ENCODE measurements at regions of chr11 and their contacts with region 1.

Region 1: DNA sequence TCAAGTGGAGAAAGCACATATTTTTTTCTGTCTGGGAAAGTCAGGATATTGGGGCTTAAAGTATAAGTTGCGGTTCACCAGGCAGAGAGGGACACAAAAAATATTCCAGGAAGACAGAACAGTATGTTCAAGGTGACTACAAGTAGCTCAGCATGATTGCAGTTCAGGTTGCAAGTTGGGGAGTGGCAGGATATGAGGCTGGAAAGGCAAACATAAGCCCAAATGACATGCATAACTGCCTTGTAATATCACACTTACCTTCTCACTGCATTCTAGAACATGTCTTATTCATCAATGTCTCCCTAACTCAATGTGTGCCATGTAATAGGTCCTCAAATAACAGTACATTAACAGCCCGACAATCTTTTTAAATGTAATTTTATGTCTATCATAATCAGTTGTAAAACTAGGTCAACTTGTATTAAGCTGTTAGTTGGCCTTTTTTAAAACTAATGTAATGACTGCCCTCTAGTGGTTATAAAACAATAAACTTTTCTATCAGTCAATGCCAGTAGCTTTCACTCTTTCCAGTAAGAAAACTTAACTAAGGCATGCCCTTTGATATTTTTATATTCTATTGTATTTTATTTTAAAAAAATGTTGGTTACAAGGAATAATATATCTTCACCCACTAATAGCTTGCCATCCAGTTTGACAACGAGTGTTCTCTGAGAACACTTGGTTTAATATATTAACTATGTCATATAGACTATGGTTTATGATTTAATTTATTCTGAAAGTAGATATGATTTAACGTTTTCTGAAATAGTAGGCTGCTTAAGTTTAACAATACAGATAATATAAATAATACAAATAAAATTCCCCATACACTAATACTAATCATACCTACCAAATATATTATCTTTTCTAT is 39.4 kb upstream of the CFAP300 start:
- DNase-seq: peak in 6 of 9 donors; percentile 10 to 48 (median 39)
- ATAC-seq: peak; percentile 61
- H3K4me3 ChIP-seq: no peak overlapping the region
- H3K4me3 Mint-ChIP-seq: no peak overlapping the region
- H3K27ac ChIP-seq: no peak overlapping the region
- H3K27ac Mint-ChIP-seq: no peak overlapping the region
- H3K4me1 ChIP-seq: no peaks in the 10 kb centered on the region
- H3K4me1 Mint-ChIP-seq: peaks cover 0 to 6% (median 5%) of the 10 kb centered on the region in 7 donors
- H3K27me3 ChIP-seq: no peaks in the 10 kb centered on the region
- H3K27me3 Mint-ChIP-seq: peaks cover 7 to 19% (median 13%) of the 10 kb centered on the region in 5 donors

Region 2: GRCh38 chr11:101860696-101861427 is 146.9 kb before region 1 on chr11:
- CTCF ChIA-PET with region 1: interaction called, 68 read pairs
- POLR2A ChIA-PET with region 1: no interaction called
- intact Hi-C with region 1: loop called (anchors 1 kb)
- DNase-seq: peak in 6 of 9 donors; percentile 1 to 36 (median 24)
- ATAC-seq: peak; percentile 76
- H3K4me3 ChIP-seq: no peak overlapping the region
- H3K4me3 Mint-ChIP-seq: no peak overlapping the region
- H3K27ac ChIP-seq: no peak overlapping the region
- H3K27ac Mint-ChIP-seq: no peak overlapping the region
- H3K4me1 ChIP-seq: no peaks in the 10 kb centered on the region
- H3K4me1 Mint-ChIP-seq: peaks cover 0 to 4% (median 0%) of the 10 kb centered on the region in 7 donors
- H3K27me3 ChIP-seq: no peaks in the 10 kb centered on the region
- H3K27me3 Mint-ChIP-seq: peaks cover 5 to 22% (median 12%) of the 10 kb centered on the region in 5 donors

Region 3: DNA sequence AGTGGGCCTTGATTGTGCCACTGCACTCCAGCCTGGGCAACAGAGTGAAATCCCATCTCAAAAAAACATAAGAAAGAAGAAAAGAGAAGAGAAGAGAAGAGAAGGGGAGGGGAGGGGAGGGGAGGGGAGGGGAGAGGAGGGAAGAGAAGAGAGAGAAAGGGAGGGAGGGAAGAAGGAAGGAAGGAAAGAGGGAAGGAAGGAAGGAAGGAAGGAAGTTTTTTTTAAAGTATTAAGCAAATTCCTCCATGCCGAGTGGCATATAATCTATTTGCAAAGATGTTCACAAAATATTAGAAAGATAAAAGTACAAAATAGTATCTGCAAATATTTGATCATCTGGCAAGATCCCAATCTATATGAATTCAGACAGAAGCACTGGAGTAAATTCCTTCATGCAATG is 29.0 kb after region 1 on chr11:
- CTCF ChIA-PET with region 1: no interaction called
- POLR2A ChIA-PET with region 1: no interaction called
- intact Hi-C with region 1: no loop called
- DNase-seq: no peak
- ATAC-seq: no peak
- H3K4me3 ChIP-seq: no peak overlapping the region
- H3K4me3 Mint-ChIP-seq: peak overlapping the region in 1 of 10 donors; percentile 30
- H3K27ac ChIP-seq: no peak overlapping the region
- H3K27ac Mint-ChIP-seq: no peak overlapping the region
- H3K4me1 ChIP-seq: no peaks in the 10 kb centered on the region
- H3K4me1 Mint-ChIP-seq: no peaks in the 10 kb centered on the region
- H3K27me3 ChIP-seq: no peaks in the 10 kb centered on the region
- H3K27me3 Mint-ChIP-seq: peaks cover 0 to 41% (median 26%) of the 10 kb centered on the region in 5 donors

Measured in naive thymus-derived CD4-positive, alpha-beta T cell (primary cell).